CD4-positive, alpha-beta T cell (primary cell): ENCODE measurements at regions of chr7 and their contacts with region 1.

Region 1: DNA sequence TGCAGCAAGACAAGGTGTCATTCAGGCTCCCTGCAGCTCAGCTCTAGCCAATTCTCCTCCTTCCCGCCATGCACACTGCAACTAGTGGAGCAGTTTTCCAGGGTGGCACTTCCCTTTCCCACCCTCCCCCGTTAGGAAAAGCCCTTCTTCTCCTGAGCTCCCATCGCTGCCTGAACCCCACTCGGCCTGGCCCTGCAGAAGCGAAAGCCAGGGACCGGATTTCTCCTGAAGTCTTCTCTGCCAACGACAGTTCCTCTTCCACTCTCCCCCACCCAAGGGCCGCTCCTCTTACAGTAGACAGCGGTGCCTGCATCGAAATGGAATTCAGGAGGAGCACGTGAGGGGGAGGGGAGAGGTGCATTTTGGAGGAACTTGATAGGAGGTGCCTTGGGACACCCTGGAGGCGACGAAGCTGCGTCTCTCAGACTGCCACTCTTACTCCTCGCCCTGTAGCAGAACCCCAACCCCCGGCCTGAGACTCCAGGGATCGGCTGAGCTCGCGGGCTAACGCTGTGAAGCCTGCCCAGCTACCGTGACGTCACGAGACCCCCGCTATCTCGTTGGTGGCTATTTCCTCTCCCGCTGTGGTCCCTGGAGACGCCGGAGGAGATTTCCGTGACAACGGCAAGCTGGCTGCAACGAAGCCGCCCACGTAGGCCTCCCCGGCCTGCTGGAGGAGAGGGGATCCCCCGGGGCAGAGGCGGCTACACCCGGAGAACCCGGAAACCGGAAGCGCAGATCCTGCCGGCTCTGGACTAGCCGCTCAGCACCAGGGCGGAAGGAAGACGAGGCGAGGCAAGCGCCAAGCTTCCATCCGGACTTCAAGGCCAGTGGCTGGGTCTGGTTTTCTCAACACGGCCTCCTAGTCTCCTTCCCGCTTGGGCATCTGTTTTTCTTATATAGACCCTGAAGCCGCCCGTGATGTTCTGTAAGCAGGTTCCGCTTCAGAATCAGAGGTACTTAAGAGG is 109.7 kb downstream of the RALA start:
- DNase-seq: peak; percentile 80 to 99 (median 92)
- ATAC-seq: peak; percentile 91
- H3K4me3 ChIP-seq: peak overlapping the region; percentile 73
- H3K4me3 Mint-ChIP-seq: peak overlapping the region; percentile 97
- H3K27ac ChIP-seq: peak overlapping the region; percentile 71 to 89
- H3K27ac Mint-ChIP-seq: peak overlapping the region; percentile 96
- H3K4me1 ChIP-seq: peaks cover 42% of the 10 kb centered on the region
- H3K4me1 Mint-ChIP-seq: peaks cover 41% of the 10 kb centered on the region
- H3K27me3 ChIP-seq: no peaks in the 10 kb centered on the region
- H3K27me3 Mint-ChIP-seq: no peaks in the 10 kb centered on the region
- CTCF ChIP-seq: no peak

Region 2: GRCh38 chr7:39566023-39566921 is 166.8 kb before region 1 on chr7 and contains the start of gene YAE1:
- CTCF ChIA-PET with region 1: no interaction called
- POLR2A ChIA-PET with region 1: interaction called, 11 read pairs
- intact Hi-C with region 1: no loop called
- DNase-seq: peak; percentile 56 to 88 (median 76)
- ATAC-seq: peak; percentile 87
- H3K4me3 ChIP-seq: peak within 1 kb of the TSS; percentile 75
- H3K4me3 Mint-ChIP-seq: peak within 1 kb of the TSS; percentile 99
- H3K27ac ChIP-seq: peak within 1 kb of the TSS; percentile 47 to 58
- H3K27ac Mint-ChIP-seq: peak within 1 kb of the TSS; percentile 90
- H3K4me1 ChIP-seq: peaks cover 7% of the 10 kb centered on the region
- H3K4me1 Mint-ChIP-seq: peaks cover 32% of the 10 kb centered on the region
- H3K27me3 ChIP-seq: no peaks in the 10 kb centered on the region
- H3K27me3 Mint-ChIP-seq: no peaks in the 10 kb centered on the region
- CTCF ChIP-seq: no peak
- total RNA-seq, gene YAE1: 5.0 to 7.4 TPM

Region 3: GRCh38 chr7:39623018-39623731 is 109.9 kb before region 1 on chr7 and contains the start of gene RALA:
- CTCF ChIA-PET with region 1: interaction called, 3 read pairs
- POLR2A ChIA-PET with region 1: interaction called, 30 read pairs
- intact Hi-C with region 1: loop called in 1 of 2 experiments (anchors 2 kb)
- DNase-seq: peak; percentile 82 to 94 (median 88)
- ATAC-seq: peak; percentile 92
- H3K4me3 ChIP-seq: peak within 1 kb of the TSS; percentile 81
- H3K4me3 Mint-ChIP-seq: peak within 1 kb of the TSS; percentile 97
- H3K27ac ChIP-seq: peak within 1 kb of the TSS; percentile 82 to 85
- H3K27ac Mint-ChIP-seq: peak within 1 kb of the TSS; percentile 86
- H3K4me1 ChIP-seq: peaks cover 27% of the 10 kb centered on the region
- H3K4me1 Mint-ChIP-seq: peaks cover 52% of the 10 kb centered on the region
- H3K27me3 ChIP-seq: no peaks in the 10 kb centered on the region
- H3K27me3 Mint-ChIP-seq: no peaks in the 10 kb centered on the region
- CTCF ChIP-seq: no peak
- total RNA-seq, gene RALA: 24.5 to 27.5 TPM

Region 4: DNA sequence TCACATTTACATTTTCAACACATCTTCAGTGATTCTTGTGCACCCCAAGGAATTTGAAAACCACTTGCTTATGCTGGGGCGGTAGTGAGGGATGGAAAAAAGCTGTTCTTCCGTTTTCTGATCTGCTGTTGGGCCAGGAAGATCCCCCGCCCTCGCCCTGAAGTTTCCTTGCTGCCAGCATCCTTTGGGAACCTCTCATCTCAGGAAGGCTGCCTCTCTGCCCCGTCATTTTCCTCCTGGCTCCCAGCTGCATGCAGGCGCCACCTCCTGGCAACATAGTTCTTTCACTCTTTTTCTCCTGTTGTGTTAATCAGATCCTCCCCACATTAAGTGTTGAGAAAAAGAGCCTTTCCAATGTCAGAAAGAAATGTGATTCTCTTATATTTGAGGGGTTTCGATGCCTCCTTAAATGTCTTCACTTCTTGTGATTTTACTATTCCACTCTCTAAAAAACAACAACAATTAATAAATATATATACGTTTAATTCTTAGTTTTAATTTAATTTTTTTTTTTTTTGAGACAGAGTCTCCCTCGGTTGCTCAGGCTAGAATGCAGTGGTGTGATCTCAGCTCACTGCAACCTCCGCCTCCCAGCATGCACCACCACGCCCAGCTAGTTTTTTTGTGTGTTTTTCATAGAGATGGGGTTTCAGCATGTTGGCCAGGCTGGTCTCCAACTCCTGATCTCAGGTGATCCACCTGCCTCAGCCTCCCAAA is 13.1 kb after region 1 on chr7:
- CTCF ChIA-PET with region 1: interaction called, 5 read pairs
- POLR2A ChIA-PET with region 1: interaction called, 3 read pairs
- intact Hi-C with region 1: loop called in 1 of 2 experiments (anchors 1 kb)
- DNase-seq: peak; percentile 23 to 79 (median 57)
- ATAC-seq: peak; percentile 58
- H3K4me3 ChIP-seq: no peak overlapping the region
- H3K4me3 Mint-ChIP-seq: no peak overlapping the region
- H3K27ac ChIP-seq: no peak overlapping the region
- H3K27ac Mint-ChIP-seq: no peak overlapping the region
- H3K4me1 ChIP-seq: no peaks in the 10 kb centered on the region
- H3K4me1 Mint-ChIP-seq: peaks cover 5% of the 10 kb centered on the region
- H3K27me3 ChIP-seq: no peaks in the 10 kb centered on the region
- H3K27me3 Mint-ChIP-seq: no peaks in the 10 kb centered on the region
- CTCF ChIP-seq: peak; percentile 78